ENCODE measurements at regions of chr1 and their contacts with region 1.

Region 1: DNA sequence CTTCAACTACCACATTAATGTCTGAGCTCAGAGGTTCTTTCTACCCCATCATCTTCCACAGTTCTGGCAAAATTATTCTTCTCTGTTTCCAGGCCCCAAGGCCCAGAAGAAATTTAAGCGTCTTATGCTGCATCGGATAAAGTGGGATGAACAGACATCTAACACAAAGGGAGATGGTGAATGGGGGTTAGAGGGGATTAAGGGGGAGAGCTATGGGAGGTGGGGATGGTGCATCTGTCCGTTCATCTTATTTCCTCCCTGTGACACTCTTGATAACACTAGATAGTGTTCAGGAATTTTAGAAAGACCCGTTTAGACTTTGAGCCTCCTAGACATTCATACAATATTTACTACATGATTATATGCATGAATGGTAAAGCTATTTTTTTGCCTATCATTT is 17.6 kb upstream of the RPRD2 start:
- DNase-seq: no peak
- ATAC-seq: no peak

Region 2: GRCh38 chr1:150006626-150007421 is 339.5 kb before region 1 on chr1:
- intact Hi-C with region 1: no loop called
- DNase-seq: no peak
- ATAC-seq: no peak

Region 3: GRCh38 chr1:150829743-150830142 is 483.4 kb after region 1 on chr1:
- intact Hi-C with region 1: loop called (anchors 10 kb)
- DNase-seq: no peak
- ATAC-seq: no peak

Measured in Right ventricle myocardium superior (tissue), 1 donor.